IMR-90 (cell line): ENCODE measurements at regions of chr6 and their contacts with region 1.

Region 1: GRCh38 chr6:140052756-140053729 is 678.6 kb upstream of the CITED2 start:
- DNase-seq: peak; percentile 59
- ATAC-seq: no peak; the same call in 1 of the 2 replicates
- H3K4me3 ChIP-seq: no peak overlapping the region
- H3K27ac ChIP-seq: peak overlapping the region; percentile 18
- H3K4me1 ChIP-seq: peaks cover 12% of the 10 kb centered on the region
- H3K27me3 ChIP-seq: no peaks in the 10 kb centered on the region
- CTCF ChIP-seq: peak; percentile 44
- POLR2A ChIP-seq: no peak
- RAD21 ChIP-seq: peak; percentile 52

Region 2: DNA sequence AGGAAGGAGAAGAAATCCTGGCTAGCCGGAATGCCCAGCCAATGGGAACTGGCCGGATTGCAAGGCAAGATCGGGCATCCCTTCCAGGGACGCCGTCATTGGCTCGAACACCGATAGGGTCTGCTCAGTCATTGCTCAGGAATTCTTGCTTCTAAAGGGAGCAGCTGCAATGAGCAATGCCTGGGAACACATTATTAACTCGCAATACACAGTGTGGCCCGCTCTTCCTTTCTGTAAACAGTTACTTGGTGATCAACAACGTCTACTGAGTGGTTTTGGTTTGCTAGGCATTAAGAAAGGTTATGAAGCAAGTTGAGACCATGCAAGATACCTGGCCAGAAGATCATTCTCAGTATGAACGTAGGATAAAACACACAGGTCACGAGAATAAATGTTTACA is 513.2 kb before region 1 on chr6:
- CTCF ChIA-PET with region 1: no interaction called
- POLR2A ChIA-PET with region 1: no interaction called
- dilution Hi-C with region 1: no loop called
- in situ Hi-C with region 1: no loop called
- intact Hi-C with region 1: loop called (anchors 10 kb)
- DNase-seq: peak; percentile 98
- ATAC-seq: peak; percentile 97
- H3K4me3 ChIP-seq: no peak overlapping the region
- H3K27ac ChIP-seq: peak overlapping the region; percentile 86
- H3K4me1 ChIP-seq: peaks cover 8% of the 10 kb centered on the region
- H3K27me3 ChIP-seq: no peaks in the 10 kb centered on the region
- CTCF ChIP-seq: no peak
- POLR2A ChIP-seq: no peak
- RAD21 ChIP-seq: peak; percentile 7; the same call in 1 of the 2 replicates

Region 3: DNA sequence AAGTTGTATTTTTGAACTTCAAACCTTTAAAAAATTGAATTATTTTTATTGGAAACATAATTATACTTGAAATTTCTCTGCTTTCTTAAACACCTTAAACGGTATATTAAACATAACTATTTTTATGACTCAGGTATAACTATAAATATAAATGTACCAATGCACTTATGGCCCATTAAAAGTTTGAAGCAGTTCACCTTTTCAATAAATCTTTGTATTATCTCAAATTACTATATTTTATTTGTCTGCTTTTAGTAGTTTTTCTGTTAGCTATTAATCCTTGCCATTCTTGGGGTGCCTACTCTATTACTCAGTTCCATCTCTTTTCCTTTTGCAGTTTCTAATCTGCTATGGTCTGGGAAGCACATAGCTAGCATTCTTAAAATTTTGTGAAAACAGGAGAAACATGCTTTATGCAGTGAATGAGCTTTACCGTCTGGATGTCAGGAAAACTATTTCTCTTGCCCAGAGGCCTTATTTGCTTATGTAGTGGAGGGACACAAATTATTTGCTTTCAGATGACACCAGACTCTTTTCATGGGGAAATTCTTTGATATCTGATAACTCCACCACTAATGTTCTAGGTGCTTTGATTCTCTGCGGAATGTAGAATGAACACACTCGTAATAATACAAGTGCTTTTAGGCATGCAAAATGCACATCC is 299.7 kb before region 1 on chr6:
- CTCF ChIA-PET with region 1: no interaction called
- POLR2A ChIA-PET with region 1: no interaction called
- dilution Hi-C with region 1: no loop called
- in situ Hi-C with region 1: no loop called
- intact Hi-C with region 1: loop called (anchors 5 kb)
- DNase-seq: peak; percentile 77
- ATAC-seq: peak; percentile 75
- H3K4me3 ChIP-seq: no peak overlapping the region
- H3K27ac ChIP-seq: 0 out of 2 replicates have a peak overlapping the region, but pooled peaks have one; percentile 29
- H3K4me1 ChIP-seq: peaks cover 12% of the 10 kb centered on the region
- H3K27me3 ChIP-seq: no peaks in the 10 kb centered on the region
- CTCF ChIP-seq: no peak
- POLR2A ChIP-seq: no peak
- RAD21 ChIP-seq: no peak

Region 4: DNA sequence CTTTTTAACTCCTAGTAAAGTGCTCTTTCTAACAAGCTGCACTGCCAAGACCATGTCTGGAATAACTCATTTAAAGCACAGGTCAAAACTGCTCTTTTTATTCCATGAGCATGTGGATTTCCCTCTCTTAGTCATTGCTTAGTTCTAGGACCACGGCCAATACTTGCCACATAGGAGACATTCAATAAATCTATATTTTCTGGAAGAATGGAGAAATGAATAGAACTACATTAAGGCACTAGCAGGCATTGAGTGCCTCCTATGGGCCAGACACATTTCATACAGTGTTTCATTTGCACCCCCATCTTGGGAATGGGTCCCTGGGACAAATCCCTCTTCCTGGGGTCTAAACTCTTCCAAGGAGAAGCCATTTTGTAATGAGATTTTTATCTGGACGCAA is 125.8 kb before region 1 on chr6:
- CTCF ChIA-PET with region 1: no interaction called
- POLR2A ChIA-PET with region 1: no interaction called
- dilution Hi-C with region 1: no loop called
- in situ Hi-C with region 1: no loop called
- intact Hi-C with region 1: loop called (anchors 5 kb)
- DNase-seq: peak; percentile 93
- ATAC-seq: peak; percentile 48
- H3K4me3 ChIP-seq: no peak overlapping the region
- H3K27ac ChIP-seq: no peak overlapping the region
- H3K4me1 ChIP-seq: peaks cover 7% of the 10 kb centered on the region
- H3K27me3 ChIP-seq: no peaks in the 10 kb centered on the region
- CTCF ChIP-seq: peak; percentile 60
- POLR2A ChIP-seq: no peak
- RAD21 ChIP-seq: peak; percentile 68

Region 5: DNA sequence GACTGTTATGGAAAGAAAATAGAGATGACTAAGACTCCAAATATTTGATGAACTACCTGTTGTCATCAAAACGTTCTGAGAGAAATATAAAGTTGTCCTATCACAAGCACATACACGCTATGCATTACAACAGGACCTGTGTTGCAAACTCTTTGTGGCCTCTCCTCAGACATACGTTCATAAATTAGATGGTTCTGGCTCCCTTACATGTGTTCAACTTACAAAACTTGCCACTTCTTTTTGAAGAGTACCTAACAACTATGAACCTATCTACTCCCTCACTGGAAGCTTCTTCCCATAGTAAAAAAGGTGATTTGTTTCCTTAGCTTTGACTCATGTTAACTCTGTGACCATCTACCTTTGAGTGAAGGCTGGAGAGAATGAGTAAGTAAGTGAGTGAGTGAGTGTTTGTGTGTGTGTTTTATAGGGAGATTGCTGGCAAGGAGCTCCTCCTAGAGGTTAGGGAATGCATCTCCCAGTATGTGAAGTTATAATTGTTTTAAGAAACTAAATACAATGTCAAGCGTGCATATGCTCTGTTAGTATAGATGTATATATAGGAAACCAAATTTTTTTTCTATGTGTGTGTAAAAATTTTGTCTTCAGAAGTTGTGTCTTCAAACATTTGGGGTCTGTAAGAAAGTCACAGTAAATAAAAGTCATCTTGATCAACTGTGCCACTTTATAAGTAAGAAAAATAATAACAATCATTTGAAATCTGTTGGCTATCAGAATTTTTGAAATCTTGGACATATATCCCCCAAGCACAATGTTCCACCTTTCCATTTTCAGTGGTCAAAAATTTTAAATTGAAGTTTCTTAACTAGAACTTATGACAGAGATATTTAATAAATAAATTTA is 868.6 kb after region 1 on chr6:
- CTCF ChIA-PET with region 1: no interaction called
- POLR2A ChIA-PET with region 1: no interaction called
- dilution Hi-C with region 1: no loop called
- in situ Hi-C with region 1: no loop called
- intact Hi-C with region 1: loop called (anchors 5 kb)
- DNase-seq: peak; percentile 86
- ATAC-seq: peak; percentile 77
- H3K4me3 ChIP-seq: no peak overlapping the region
- H3K27ac ChIP-seq: no peak overlapping the region
- H3K4me1 ChIP-seq: no peaks in the 10 kb centered on the region; the same call in 1 of the 2 replicates
- H3K27me3 ChIP-seq: no peaks in the 10 kb centered on the region
- CTCF ChIP-seq: peak; percentile 87
- POLR2A ChIP-seq: peak; percentile 34; the same call in 1 of the 2 replicates
- RAD21 ChIP-seq: peak; percentile 94